HepG2 (cell line): ENCODE measurements at regions of chr22 and their contacts with region 1.

Region 1: GRCh38 chr22:36028646-36029405 is at the start of gene RBFOX2:
- DNase-seq: peak; percentile 91
- ATAC-seq: peak; percentile 88
- H3K4me3 ChIP-seq: peak within 1 kb of the TSS; percentile 93 to 96 (median 96)
- H3K27ac ChIP-seq: peak within 1 kb of the TSS; percentile 72
- H3K4me1 ChIP-seq: peaks cover 58% of the 10 kb centered on the region
- H3K27me3 ChIP-seq: no peaks in the 10 kb centered on the region; a peak in 1 of 5 replicates
- CTCF ChIP-seq: no peak
- EP300 ChIP-seq: no peak
- POLR2A ChIP-seq: peak; percentile 19 to 81; a peak in 3 of 4 replicates
- RAD21 ChIP-seq: 0 out of 2 replicates have a peak, but pooled peaks have one; percentile 6
- total RNA-seq, gene RBFOX2: 36.9 and 37.3 TPM in 2 replicates

Region 2: GRCh38 chr22:35872451-35872850 is 156.4 kb before region 1 on chr22:
- CTCF ChIA-PET with region 1: no interaction called
- POLR2A ChIA-PET with region 1: no interaction called
- in situ Hi-C with region 1: no loop called
- intact Hi-C with region 1: no loop called
- DNase-seq: no peak
- ATAC-seq: no peak
- H3K4me3 ChIP-seq: no peak overlapping the region
- H3K27ac ChIP-seq: no peak overlapping the region
- H3K4me1 ChIP-seq: no peaks in the 10 kb centered on the region
- H3K27me3 ChIP-seq: no peaks in the 10 kb centered on the region
- CTCF ChIP-seq: no peak
- EP300 ChIP-seq: no peak
- POLR2A ChIP-seq: no peak
- RAD21 ChIP-seq: no peak

Region 3: GRCh38 chr22:35987487-35987886 is 41.3 kb before region 1 on chr22:
- CTCF ChIA-PET with region 1: no interaction called
- POLR2A ChIA-PET with region 1: interaction called, 12 read pairs
- in situ Hi-C with region 1: no loop called
- intact Hi-C with region 1: no loop called
- DNase-seq: peak; percentile 15
- ATAC-seq: no peak; the same call in 2 of the 3 replicates
- H3K4me3 ChIP-seq: no peak overlapping the region
- H3K27ac ChIP-seq: peak overlapping the region; percentile 14
- H3K4me1 ChIP-seq: peaks cover 90% of the 10 kb centered on the region
- H3K27me3 ChIP-seq: no peaks in the 10 kb centered on the region
- CTCF ChIP-seq: no peak
- EP300 ChIP-seq: no peak
- POLR2A ChIP-seq: no peak
- RAD21 ChIP-seq: no peak

Region 4: DNA sequence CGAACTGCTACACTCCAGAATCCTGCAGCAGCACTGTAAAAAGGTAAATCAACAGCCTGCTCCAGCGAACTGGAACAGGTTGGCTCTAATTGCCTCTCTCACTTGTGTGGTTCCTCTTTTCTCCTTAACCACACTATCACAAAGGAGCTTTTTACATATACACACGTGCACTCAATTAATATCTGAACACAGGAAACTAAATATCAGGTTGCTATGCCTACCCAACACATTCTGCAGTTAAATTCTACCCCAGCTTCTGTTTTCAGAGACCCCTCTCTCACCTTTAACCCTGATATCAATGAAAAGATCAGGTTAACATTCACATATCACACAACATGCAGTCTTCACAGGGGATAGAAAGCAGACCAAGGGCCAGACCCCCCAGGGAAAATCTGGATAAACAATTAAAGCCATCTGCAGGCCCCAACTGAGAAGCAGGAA is 11.2 kb before region 1 on chr22:
- CTCF ChIA-PET with region 1: no interaction called
- POLR2A ChIA-PET with region 1: interaction called, 13 read pairs
- in situ Hi-C with region 1: no loop called
- intact Hi-C with region 1: no loop called
- DNase-seq: no peak
- ATAC-seq: no peak
- H3K4me3 ChIP-seq: no peak overlapping the region
- H3K27ac ChIP-seq: no peak overlapping the region
- H3K4me1 ChIP-seq: peaks cover 37% of the 10 kb centered on the region
- H3K27me3 ChIP-seq: no peaks in the 10 kb centered on the region
- CTCF ChIP-seq: no peak
- EP300 ChIP-seq: no peak
- POLR2A ChIP-seq: no peak
- RAD21 ChIP-seq: no peak

Region 5: GRCh38 chr22:36065775-36066559 is 37.1 kb after region 1 on chr22:
- CTCF ChIA-PET with region 1: interaction called, 7 read pairs
- POLR2A ChIA-PET with region 1: interaction called, 20 read pairs
- in situ Hi-C with region 1: no loop called
- intact Hi-C with region 1: loop called (anchors 5 kb)
- DNase-seq: peak; percentile 85
- ATAC-seq: peak; percentile 90
- H3K4me3 ChIP-seq: peak overlapping the region; percentile 46 to 75 (median 61)
- H3K27ac ChIP-seq: peak overlapping the region; percentile 48
- H3K4me1 ChIP-seq: peaks cover 15% of the 10 kb centered on the region
- H3K27me3 ChIP-seq: no peaks in the 10 kb centered on the region
- CTCF ChIP-seq: peak; percentile 91
- EP300 ChIP-seq: no peak
- POLR2A ChIP-seq: peak; percentile 54 to 68
- RAD21 ChIP-seq: peak; percentile 90